Right lobe of liver (tissue), 6 donors: ENCODE measurements at regions of chr1 and their contacts with region 1.

Region 1: DNA sequence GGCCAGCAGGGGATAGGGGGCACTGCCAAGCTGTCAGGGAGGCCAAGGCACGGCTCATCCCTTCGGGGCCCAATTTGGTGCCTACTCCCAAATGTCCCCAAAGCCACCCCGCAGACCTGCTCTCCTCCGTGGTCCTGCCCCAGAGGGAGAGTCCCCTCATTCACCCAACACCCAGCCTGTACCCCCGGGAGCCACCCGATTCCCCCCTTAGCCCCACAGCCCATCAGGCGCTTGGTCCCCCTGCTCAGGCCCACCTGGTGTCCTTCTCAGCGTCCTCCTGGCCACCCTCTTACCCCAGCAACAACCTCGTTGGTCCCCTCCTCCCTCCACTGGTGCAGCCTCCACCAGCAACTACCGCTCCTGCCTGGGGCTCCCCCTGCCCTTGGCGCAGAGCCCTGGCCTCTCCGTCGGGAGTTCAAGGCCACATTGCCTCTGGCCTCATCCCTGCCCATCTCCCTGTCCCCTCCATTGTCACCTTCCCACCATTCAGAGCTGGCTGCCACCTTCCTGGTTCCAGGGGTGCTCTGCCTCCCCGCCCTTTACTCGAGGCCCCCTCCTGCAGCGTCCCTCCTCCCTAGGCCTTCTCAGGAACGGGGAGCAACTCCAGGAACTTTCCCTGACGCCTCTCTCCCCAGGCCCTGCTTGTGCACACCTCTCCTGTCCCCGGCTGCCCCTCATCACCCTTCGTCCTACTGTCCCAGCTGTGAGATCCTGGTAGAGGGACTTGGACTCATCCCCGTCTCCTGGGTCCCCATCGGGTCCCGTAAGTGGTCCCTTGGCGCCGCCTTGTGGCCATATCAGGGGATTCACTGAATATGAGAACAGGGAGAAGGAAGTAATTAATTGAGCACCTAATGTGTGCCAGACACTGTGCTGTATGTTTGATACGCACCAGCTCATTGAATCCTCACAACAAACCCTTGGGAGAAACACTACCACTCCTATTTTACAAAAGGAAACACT is 73.9 kb downstream of the RAP1GAP start:
- DNase-seq: peak; percentile 70 to 82 (median 72)
- ATAC-seq: peak; percentile 33 to 59 (median 50)
- H3K4me3 ChIP-seq: no peak overlapping the region
- H3K27ac ChIP-seq: no peak overlapping the region
- H3K4me1 ChIP-seq: no peaks in the 10 kb centered on the region
- H3K27me3 ChIP-seq: no peaks in the 10 kb centered on the region
- CTCF ChIP-seq: peak; percentile 60 to 66 (median 65)
- POLR2A ChIP-seq: no peak

Region 2: DNA sequence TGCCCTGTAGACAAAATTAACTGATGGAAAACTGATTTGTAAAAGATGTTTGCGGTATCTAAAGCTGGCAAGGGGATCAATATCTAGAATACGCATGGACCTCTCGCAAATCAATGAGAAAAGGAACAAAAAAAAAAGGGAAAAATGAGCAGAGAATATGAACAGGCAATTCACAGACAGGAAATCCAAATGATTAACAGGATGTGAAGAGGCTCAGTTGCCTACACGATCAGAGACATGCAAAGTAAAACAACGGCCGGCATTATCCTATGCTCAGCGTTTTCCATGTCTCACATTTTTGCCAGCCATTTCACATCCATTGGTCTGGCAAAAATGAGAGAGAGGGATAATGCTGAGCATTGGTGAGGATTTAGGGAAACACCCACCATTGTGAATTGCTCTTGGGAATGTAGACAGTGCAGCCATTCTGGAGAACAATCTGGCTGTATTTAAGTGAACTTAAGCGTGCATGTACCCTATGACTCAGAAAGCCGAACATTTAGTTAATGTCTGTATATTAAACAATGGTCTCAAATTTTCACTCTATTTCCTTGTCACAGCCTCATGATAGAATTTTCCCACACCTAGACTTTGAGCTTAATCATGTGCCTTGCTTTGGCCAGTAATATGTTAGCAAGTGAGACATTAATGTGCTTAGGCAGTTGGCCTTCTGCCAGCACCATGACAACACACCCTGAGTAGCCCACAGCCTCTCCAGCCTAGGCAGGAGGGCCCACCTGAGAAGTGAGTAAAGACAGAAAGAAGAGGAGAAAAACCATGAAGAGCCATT is 216.3 kb before region 1 on chr1:
- intact Hi-C with region 1: loop called in 1 of 2 experiments (anchors 10 kb)
- DNase-seq: no peak
- ATAC-seq: no peak
- H3K4me3 ChIP-seq: no peak overlapping the region
- H3K27ac ChIP-seq: no peak overlapping the region
- H3K4me1 ChIP-seq: no peaks in the 10 kb centered on the region
- H3K27me3 ChIP-seq: no peaks in the 10 kb centered on the region
- CTCF ChIP-seq: no peak
- POLR2A ChIP-seq: no peak

Region 3: DNA sequence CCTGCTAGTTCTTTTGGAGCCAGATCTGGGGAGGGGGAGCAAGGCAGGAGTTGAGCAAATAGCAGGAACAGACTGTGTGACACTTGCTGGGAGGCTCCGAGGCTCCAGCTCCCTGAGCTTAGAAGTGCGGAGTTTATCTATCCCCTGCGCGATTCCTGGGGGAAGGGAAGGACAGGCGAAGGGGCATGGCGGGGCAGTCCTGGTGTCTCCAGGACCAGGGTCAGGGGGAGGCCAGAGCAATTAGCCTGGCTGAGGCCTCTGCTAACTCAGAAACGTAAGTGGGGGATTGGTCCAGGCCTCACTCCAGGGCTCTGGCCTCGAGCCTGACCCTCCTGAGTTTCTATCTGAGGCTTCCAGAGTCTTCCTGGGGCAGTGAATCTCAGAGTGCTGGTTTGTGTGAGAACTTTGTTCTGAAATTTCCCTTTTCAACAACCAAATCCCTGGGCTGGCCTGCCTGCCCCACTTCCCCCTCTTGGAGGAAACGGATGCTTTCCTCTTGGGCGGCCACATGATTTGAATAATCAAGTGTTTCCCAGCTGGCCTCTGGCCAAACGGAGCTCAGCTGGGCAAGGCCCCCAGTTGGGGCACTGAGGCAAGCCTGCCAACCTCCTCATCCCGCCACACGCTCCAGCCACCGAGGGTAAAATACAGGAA is 70.4 kb before region 1 on chr1:
- intact Hi-C with region 1: no loop called
- DNase-seq: no peak
- ATAC-seq: peak; percentile 51 to 74 (median 66)
- H3K4me3 ChIP-seq: no peak overlapping the region
- H3K27ac ChIP-seq: peak overlapping the region in 1 of 3 donors; percentile 2
- H3K4me1 ChIP-seq: no peaks in the 10 kb centered on the region
- H3K27me3 ChIP-seq: no peaks in the 10 kb centered on the region
- CTCF ChIP-seq: no peak
- POLR2A ChIP-seq: no peak

Region 4: GRCh38 chr1:21659099-21659923 is 64.1 kb after region 1 on chr1:
- intact Hi-C with region 1: loop called in 1 of 2 experiments (anchors 10 kb)
- DNase-seq: peak; percentile 77 to 82 (median 79)
- ATAC-seq: peak; percentile 86 to 98 (median 92)
- H3K4me3 ChIP-seq: no peak overlapping the region
- H3K27ac ChIP-seq: no peak overlapping the region
- H3K4me1 ChIP-seq: no peaks in the 10 kb centered on the region
- H3K27me3 ChIP-seq: no peaks in the 10 kb centered on the region
- CTCF ChIP-seq: peak; percentile 92 to 97 (median 94)
- POLR2A ChIP-seq: no peak

Region 5: DNA sequence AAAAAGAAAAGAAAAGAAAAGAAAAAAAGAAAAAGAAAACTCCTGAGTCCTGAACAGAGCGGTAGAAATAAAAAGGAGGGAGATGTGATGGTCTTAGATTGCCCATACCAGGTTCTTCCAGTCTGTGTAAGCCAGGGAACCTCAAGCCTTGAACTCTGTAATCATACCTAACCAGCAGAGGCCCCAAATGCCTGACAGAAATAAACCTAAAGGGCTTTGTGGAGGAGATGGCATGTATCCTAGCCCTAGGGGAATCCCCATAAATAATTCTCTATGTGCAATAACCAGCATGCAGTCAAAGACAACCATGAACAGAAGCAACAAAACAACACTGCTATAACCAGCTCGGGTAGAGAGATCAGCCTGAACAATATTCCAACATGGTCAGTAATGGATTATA is 147.4 kb after region 1 on chr1:
- intact Hi-C with region 1: no loop called
- DNase-seq: no peak
- ATAC-seq: no peak
- H3K4me3 ChIP-seq: no peak overlapping the region
- H3K27ac ChIP-seq: no peak overlapping the region
- H3K4me1 ChIP-seq: no peaks in the 10 kb centered on the region
- H3K27me3 ChIP-seq: no peaks in the 10 kb centered on the region
- CTCF ChIP-seq: no peak
- POLR2A ChIP-seq: no peak